CD4-positive, alpha-beta T cell (primary cell): ENCODE measurements at regions of chr1 and their contacts with region 1.

Region 1: DNA sequence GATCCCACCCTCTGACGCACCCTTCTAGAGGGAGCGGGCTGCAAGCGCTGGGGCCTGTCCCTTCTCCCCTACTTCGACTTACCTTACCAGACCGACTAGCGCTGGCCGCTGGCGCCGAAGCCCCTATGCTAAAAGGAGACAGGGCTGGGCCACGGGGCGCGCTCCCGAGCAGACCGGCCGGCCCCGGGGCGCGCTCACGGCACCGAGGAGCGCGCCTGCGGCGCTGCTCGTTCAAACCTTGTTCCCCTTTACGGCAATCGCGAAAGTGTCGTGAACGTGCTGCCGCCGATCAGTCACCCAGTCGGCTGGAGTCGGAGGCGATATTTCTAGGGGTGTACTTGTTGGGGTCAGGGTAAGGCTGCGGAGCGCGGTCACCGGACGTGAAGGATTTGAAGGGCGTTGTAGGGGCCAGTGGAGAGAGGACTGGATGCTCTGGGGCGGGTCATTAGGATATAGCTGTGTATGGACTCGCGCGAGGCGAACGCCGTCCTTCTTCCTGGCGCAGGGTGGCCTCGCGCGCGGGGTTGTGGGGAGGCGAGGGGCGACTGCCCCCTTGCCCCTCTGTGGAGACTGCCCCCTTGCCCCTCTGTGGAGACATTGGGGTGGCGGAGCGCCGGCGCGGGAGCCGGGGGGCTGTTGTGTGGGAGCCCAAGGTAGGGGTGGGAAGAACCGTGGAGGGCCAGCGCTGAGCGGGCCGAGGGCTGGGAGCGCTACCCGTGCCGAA is at the starts of genes CEPT1 and DRAM2:
- DNase-seq: peak; percentile 80 to 96 (median 88)
- ATAC-seq: peak; percentile 77
- H3K4me3 ChIP-seq: peak within 1 kb of the TSS; percentile 94
- H3K4me3 Mint-ChIP-seq: peak within 1 kb of the TSS; percentile 100
- H3K27ac ChIP-seq: peak within 1 kb of the TSS; percentile 80 to 91
- H3K27ac Mint-ChIP-seq: peak within 1 kb of the TSS; percentile 90
- H3K4me1 ChIP-seq: peaks cover 17% of the 10 kb centered on the region
- H3K4me1 Mint-ChIP-seq: peaks cover 65% of the 10 kb centered on the region
- H3K27me3 ChIP-seq: no peaks in the 10 kb centered on the region
- H3K27me3 Mint-ChIP-seq: no peaks in the 10 kb centered on the region
- CTCF ChIP-seq: no peak
- total RNA-seq, gene CEPT1: 25.0 to 27.2 TPM
- total RNA-seq, gene DRAM2: 35.7 to 38.7 TPM

Region 2: DNA sequence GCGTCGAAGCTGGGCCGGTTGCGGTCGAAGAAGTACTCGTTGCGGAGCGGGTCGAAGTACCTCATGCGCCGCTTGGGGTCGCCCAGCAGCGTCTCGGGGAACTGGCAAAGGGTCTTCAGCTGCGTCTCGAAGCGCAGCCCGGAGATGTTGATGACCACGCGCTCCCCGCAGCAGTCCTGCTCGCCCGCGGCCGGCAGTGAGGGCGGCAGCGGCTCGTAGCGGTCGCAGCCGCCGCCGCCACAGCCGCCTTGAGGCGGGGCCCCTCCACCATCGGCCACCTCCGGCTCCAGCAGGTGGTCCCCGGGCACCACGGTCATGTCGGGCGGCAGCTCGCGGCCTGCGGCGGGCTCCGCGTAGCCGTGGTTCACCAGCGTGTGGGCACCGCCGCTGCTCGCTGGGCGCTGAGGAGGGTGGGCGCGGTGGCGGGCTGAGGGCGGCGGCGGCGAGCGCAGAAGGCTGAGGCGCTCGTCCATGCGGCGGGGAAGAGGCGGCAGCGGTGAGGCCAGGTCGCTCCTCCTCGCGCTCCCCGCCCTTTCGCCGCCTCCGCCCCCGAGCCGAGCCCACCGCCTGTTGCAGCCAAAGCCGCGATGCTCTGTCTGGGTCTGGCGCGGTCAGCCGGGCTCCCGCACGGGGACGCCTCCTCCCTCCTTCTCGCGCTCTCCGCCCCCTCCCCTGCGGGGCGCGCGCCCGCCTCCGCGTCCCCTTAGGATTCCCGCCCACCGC is 465.6 kb before region 1 on chr1 and contains the start of gene KCNA3:
- CTCF ChIA-PET with region 1: no interaction called
- POLR2A ChIA-PET with region 1: no interaction called
- intact Hi-C with region 1: loop called in 1 of 2 experiments (anchors 10 kb)
- DNase-seq: peak; percentile 45 to 86 (median 65)
- ATAC-seq: peak; percentile 25
- H3K4me3 ChIP-seq: peak within 1 kb of the TSS; percentile 99
- H3K4me3 Mint-ChIP-seq: peak within 1 kb of the TSS; percentile 90
- H3K27ac ChIP-seq: peak within 1 kb of the TSS; percentile 93 to 95
- H3K27ac Mint-ChIP-seq: peak within 1 kb of the TSS; percentile 73
- H3K4me1 ChIP-seq: peaks cover 16% of the 10 kb centered on the region
- H3K4me1 Mint-ChIP-seq: peaks cover 59% of the 10 kb centered on the region
- H3K27me3 ChIP-seq: no peaks in the 10 kb centered on the region
- H3K27me3 Mint-ChIP-seq: no peaks in the 10 kb centered on the region
- CTCF ChIP-seq: peak; percentile 49
- total RNA-seq, gene KCNA3: 112 to 118 TPM

Region 3: DNA sequence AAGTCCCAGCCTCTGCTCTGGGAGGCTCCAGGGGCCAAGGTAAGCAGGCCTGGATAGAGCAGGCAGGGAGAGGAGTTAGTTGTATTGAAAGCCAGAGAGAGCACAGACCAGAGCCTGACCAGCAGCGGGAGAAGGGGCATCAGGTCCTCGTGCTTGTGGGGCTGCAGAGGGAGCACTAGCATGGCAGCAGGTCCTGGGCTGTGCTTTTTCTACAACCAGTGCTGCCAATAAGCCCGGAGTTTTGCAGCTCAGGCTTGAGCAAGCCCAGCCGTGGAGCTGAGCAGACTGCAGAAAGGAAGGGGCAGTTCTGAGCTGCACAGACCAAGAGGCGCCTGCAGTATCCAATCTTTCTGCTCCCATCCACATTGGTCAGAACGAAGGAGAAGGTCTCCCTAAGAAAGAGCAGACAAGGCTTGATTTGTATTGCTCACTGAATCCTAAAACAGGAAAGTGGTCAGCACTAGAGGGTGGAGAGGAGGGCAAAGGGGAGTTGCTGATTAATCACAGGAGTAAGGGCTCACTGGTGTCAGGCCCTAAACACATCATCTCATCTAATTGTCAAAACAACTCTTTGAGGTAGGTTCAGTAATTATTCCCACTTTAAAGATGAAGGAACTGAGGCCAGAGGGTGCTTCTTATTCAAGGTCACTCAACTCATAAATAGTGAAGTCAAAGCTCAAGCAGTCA is 57.6 kb after region 1 on chr1:
- CTCF ChIA-PET with region 1: no interaction called
- POLR2A ChIA-PET with region 1: interaction called, 11 read pairs
- intact Hi-C with region 1: loop called in 1 of 2 experiments (anchors 5 kb)
- DNase-seq: peak in 13 of 14 experiments; percentile 49 to 91 (median 73)
- ATAC-seq: no peak
- H3K4me3 ChIP-seq: peak overlapping the region; percentile 79
- H3K4me3 Mint-ChIP-seq: peak overlapping the region; percentile 99
- H3K27ac ChIP-seq: peak overlapping the region; percentile 70 to 97
- H3K27ac Mint-ChIP-seq: peak overlapping the region; percentile 90
- H3K4me1 ChIP-seq: peaks cover 86% of the 10 kb centered on the region
- H3K4me1 Mint-ChIP-seq: peaks cover 88% of the 10 kb centered on the region
- H3K27me3 ChIP-seq: no peaks in the 10 kb centered on the region
- H3K27me3 Mint-ChIP-seq: no peaks in the 10 kb centered on the region
- CTCF ChIP-seq: no peak

Region 4: DNA sequence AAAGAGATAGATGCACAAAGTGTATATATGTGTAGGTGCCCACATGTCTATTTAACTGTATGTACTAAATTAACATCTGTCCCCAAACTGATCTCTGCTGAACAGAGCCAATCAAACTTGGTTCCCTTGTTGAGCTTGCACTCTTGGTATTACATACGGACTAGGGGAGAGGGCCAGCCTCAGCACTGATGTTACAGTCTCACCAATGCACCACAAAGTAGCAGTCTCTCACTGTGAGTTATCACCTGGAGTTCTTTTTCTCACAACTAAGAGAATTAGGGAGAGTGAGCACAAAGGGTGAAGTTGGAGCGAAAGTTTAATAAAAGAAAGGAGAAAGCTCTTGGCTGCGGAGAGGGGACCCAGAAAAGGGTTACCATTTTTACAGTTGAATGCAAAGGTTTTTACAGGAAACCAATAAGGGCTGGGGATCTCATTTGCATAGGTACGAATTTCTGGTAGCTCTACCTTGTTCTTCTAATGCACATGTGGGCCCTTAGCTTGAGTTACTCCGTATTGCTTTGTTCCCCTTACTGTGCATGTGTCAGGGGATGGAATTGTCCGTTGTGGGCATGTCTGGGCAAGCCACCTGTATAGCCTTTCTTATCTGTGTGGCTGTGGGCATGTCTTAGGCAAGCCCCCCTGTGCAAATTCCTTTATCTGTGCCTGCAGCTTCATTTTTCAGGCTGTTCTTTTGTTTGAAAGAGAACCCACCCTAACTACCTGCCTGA is 74.1 kb after region 1 on chr1:
- CTCF ChIA-PET with region 1: interaction called, 3 read pairs
- POLR2A ChIA-PET with region 1: interaction called, 28 read pairs
- intact Hi-C with region 1: loop called in 1 of 2 experiments (anchors 5 kb)
- DNase-seq: peak in 1 of 14 experiments; percentile 12
- ATAC-seq: no peak
- H3K4me3 ChIP-seq: no peak overlapping the region
- H3K4me3 Mint-ChIP-seq: peak overlapping the region; percentile 80
- H3K27ac ChIP-seq: peak overlapping the region; percentile 76 to 88
- H3K27ac Mint-ChIP-seq: peak overlapping the region; percentile 98
- H3K4me1 ChIP-seq: peaks cover 69% of the 10 kb centered on the region
- H3K4me1 Mint-ChIP-seq: peaks cover 94% of the 10 kb centered on the region
- H3K27me3 ChIP-seq: no peaks in the 10 kb centered on the region
- H3K27me3 Mint-ChIP-seq: peaks cover 5% of the 10 kb centered on the region
- CTCF ChIP-seq: no peak

Region 5: GRCh38 chr1:111399792-111400610 is 259.9 kb after region 1 on chr1:
- CTCF ChIA-PET with region 1: no interaction called
- POLR2A ChIA-PET with region 1: interaction called, 3 read pairs
- intact Hi-C with region 1: loop called in 1 of 2 experiments (anchors 5 kb)
- DNase-seq: peak in 12 of 14 experiments; percentile 7 to 69 (median 24)
- ATAC-seq: no peak
- H3K4me3 ChIP-seq: no peak overlapping the region
- H3K4me3 Mint-ChIP-seq: no peak overlapping the region
- H3K27ac ChIP-seq: no peak overlapping the region
- H3K27ac Mint-ChIP-seq: no peak overlapping the region
- H3K4me1 ChIP-seq: no peaks in the 10 kb centered on the region
- H3K4me1 Mint-ChIP-seq: peaks cover 40% of the 10 kb centered on the region
- H3K27me3 ChIP-seq: no peaks in the 10 kb centered on the region
- H3K27me3 Mint-ChIP-seq: no peaks in the 10 kb centered on the region
- CTCF ChIP-seq: peak; percentile 84

Region 6: DNA sequence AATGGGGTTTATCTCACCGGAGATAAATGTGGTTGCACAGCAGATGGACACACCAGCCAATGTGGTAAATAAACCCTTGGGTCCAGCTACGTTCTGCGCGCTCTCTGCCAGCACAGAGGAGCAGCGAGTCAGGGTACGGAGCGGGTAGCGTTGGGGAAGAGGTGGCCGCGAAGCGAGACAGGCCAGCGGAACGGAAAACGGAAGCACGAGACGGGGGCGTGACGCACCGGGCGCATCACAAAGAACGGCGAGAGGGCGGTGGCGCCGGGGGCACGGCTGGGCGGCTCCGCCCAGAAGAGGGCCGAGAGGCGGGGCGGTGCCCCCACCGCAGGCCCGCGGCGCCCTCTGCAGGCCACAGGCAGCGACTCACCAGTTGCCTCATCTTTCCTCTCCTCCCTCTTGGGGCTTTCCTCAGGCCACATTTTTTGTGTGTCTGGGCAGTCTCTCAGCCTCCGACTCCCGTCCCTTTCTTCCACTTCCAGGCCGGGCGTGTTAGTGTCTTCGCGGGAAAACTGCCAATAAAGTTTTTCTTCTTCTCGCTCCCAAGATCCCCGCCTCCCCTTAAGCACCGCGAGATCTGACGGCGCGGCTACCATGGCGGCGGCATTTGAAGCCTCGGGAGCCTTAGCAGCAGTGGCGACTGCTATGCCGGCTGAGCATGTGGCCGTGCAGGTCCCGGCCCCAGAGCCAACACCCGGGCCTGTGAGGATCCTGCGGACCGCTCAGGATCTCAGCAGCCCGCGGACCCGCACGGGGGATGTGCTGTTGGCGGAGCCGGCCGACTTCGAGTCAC is 615.4 kb after region 1 on chr1 and contains the start of gene DDX20:
- CTCF ChIA-PET with region 1: no interaction called
- POLR2A ChIA-PET with region 1: no interaction called
- intact Hi-C with region 1: loop called in 1 of 2 experiments (anchors 2 kb)
- DNase-seq: peak; percentile 87 to 97 (median 92)
- ATAC-seq: peak; percentile 85
- H3K4me3 ChIP-seq: peak within 1 kb of the TSS; percentile 89
- H3K4me3 Mint-ChIP-seq: peak within 1 kb of the TSS; percentile 89
- H3K27ac ChIP-seq: peak within 1 kb of the TSS; percentile 89 to 95
- H3K27ac Mint-ChIP-seq: peak within 1 kb of the TSS; percentile 96
- H3K4me1 ChIP-seq: peaks cover 24% of the 10 kb centered on the region
- H3K4me1 Mint-ChIP-seq: peaks cover 45% of the 10 kb centered on the region
- H3K27me3 ChIP-seq: no peaks in the 10 kb centered on the region
- H3K27me3 Mint-ChIP-seq: no peaks in the 10 kb centered on the region
- CTCF ChIP-seq: peak; percentile 89
- total RNA-seq, gene DDX20: 27.2 to 27.4 TPM